Endothelial cell of umbilical vein (primary cell): ENCODE measurements at regions of chr1 and their contacts with region 1.

Region 1: GRCh38 chr1:9724706-9725476 is 73.4 kb downstream of the PIK3CD start:
- DNase-seq: peak; percentile 41
- H3K4me3 ChIP-seq: no peak overlapping the region
- H3K27ac ChIP-seq: no peak overlapping the region
- H3K4me1 ChIP-seq: no peaks in the 10 kb centered on the region
- H3K27me3 ChIP-seq: no peaks in the 10 kb centered on the region
- CTCF ChIP-seq: peak; percentile 75 to 92
- POLR2A ChIP-seq: no peak

Region 2: DNA sequence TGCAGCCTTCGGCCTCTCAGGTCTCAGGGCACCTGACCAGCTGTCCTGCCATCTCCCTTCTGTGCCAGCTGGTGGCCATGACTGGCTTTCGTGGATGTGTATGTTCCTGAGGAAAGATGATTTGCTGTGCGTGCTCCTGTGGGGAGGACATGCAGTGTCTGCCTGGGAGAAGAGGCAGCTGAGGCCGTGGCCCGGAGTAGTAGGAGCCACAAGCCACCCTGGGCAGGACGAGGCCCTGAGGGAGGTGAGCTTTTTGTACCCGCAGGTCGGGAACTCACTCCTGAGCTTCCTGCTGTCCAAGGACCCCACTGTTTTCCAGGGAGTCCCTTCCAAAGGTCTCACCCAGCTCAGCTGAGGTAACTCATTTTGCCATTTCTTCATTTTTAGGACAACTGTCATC is 14.9 kb before region 1 on chr1:
- CTCF ChIA-PET with region 1: interaction called, 13 read pairs
- POLR2A ChIA-PET with region 1: no interaction called
- dilution Hi-C with region 1: no loop called
- intact Hi-C with region 1: no loop called
- DNase-seq: no peak
- H3K4me3 ChIP-seq: no peak overlapping the region
- H3K27ac ChIP-seq: no peak overlapping the region
- H3K4me1 ChIP-seq: no peaks in the 10 kb centered on the region
- H3K27me3 ChIP-seq: no peaks in the 10 kb centered on the region
- CTCF ChIP-seq: no peak
- POLR2A ChIP-seq: no peak